ENCODE measurements at regions of chr14 and their contacts with region 1.

Region 1: DNA sequence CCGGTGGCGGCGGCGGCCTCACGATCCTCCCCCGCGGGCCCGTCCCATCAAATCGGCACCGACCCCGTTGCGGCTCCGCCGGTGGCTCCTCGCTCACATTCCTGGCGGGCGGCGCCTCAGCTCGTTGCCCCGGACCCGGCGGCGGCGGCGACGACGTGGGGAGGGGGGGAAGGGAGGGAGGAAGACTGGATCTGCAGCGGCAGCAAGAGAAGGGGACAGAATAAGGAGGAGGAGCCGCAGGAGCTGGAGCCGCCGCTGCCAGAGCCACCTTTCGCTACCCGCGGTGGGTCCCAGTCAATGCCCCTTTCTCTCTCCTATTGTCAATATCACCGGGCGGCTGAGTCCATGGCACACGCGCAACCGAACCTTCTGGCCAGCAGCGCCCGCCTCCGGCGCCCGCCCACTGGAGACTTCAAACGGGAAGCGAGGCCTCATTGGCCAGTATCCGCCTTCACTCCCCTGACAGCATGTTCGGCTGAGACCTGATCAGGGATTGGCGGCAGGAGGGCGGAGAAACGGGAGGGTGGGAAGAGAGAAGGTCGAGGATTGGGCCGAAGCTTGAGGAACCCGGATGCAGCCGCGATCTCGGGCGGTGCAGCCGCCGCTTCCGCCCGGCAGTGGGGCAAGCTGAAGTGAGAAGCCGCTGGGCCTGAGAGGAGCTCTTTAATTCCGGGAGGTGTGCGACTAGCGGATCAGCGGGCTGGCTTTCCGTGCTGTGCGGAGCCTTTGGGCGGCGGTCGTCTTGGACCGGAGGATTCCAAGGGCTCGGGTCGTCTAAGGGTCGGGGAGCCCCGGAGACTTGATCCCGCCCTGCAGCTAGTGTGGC is at the start of gene PPP2R5E:
- DNase-seq: peak; percentile 99
- ATAC-seq: peak; percentile 96
- H3K4me3 Mint-ChIP-seq: peak within 1 kb of the TSS; percentile 91
- H3K27ac Mint-ChIP-seq: peak within 1 kb of the TSS; percentile 82
- H3K4me1 Mint-ChIP-seq: peaks cover 33% of the 10 kb centered on the region
- H3K27me3 Mint-ChIP-seq: peaks cover 3% of the 10 kb centered on the region
- total RNA-seq, gene PPP2R5E: 49.7 to 50.4 TPM

Region 2: DNA sequence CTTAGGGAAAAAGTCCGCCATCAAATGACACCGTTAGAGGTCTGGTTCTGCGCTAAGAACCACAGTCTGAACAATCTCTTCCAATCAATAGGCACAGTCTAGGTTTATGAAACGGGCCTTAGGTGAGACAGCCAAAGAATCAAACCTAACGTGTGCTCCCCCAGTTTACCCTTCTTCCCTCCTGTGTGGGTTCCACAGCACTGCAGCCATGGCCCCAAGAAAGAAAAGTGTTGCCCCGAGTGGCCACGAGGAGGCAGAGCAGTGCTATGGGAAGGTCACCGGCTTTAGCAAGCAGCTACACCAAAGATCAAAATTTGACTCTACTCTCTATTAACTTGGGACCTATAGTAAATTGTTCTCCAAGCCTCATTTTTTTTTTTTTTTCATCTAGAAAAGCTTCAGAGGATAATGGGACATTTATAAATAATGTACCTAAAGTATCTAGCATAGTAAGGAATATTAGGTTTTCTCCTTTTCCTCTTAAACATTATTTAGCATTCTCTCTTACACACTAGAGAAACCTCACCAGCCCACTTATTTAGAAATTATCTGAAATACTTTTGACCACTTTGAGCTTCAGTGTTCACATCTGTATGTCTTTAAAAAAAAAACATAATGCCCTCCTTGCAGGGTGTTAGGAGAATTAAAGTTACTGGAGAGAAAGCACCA is 154.3 kb before region 1 on chr14:
- CTCF ChIA-PET with region 1: interaction called, 33 read pairs
- POLR2A ChIA-PET with region 1: interaction called, 5 read pairs
- DNase-seq: peak; percentile 73
- ATAC-seq: peak; percentile 64
- H3K4me3 Mint-ChIP-seq: no peak overlapping the region
- H3K27ac Mint-ChIP-seq: no peak overlapping the region
- H3K4me1 Mint-ChIP-seq: peaks cover 17% of the 10 kb centered on the region
- H3K27me3 Mint-ChIP-seq: no peaks in the 10 kb centered on the region

Region 3: GRCh38 chr14:63641473-63642228 is 98.4 kb after region 1 on chr14 and contains the start of gene WDR89:
- CTCF ChIA-PET with region 1: no interaction called
- POLR2A ChIA-PET with region 1: interaction called, 13 read pairs
- DNase-seq: peak; percentile 98
- ATAC-seq: peak; percentile 93
- H3K4me3 Mint-ChIP-seq: peak within 1 kb of the TSS; percentile 76
- H3K27ac Mint-ChIP-seq: peak within 1 kb of the TSS; percentile 92
- H3K4me1 Mint-ChIP-seq: peaks cover 34% of the 10 kb centered on the region
- H3K27me3 Mint-ChIP-seq: no peaks in the 10 kb centered on the region
- total RNA-seq, gene WDR89: 21.8 to 21.9 TPM

Measured in activated CD8-positive, alpha-beta T cell treated with anti-CD3 and anti-CD28 coated beads, Interleukin-2, amount 10 ng/mL, durations not matched to agents 7 days and 5 days (primary cell).